Naive thymus-derived CD4-positive, alpha-beta T cell (primary cell): ENCODE measurements at regions of chr14 and their contacts with region 1.

Region 1: GRCh38 chr14:55160989-55161388 is 30.4 kb downstream of the DLGAP5 start:
- DNase-seq: peak in 5 of 9 donors; percentile 6 to 37 (median 16)
- ATAC-seq: peak; percentile 68
- H3K4me3 ChIP-seq: no peak overlapping the region
- H3K4me3 Mint-ChIP-seq: no peak overlapping the region
- H3K27ac ChIP-seq: no peak overlapping the region
- H3K27ac Mint-ChIP-seq: peak overlapping the region in 1 of 9 donors; percentile 60
- H3K4me1 ChIP-seq: no peaks in the 10 kb centered on the region
- H3K4me1 Mint-ChIP-seq: peaks cover 0 to 20% (median 9%) of the 10 kb centered on the region in 7 donors
- H3K27me3 ChIP-seq: no peaks in the 10 kb centered on the region
- H3K27me3 Mint-ChIP-seq: peaks cover 0 to 4% (median 0%) of the 10 kb centered on the region in 5 donors

Region 2: GRCh38 chr14:54893151-54893760 is 267.7 kb before region 1 on chr14:
- CTCF ChIA-PET with region 1: no interaction called
- POLR2A ChIA-PET with region 1: no interaction called
- intact Hi-C with region 1: no loop called
- DNase-seq: peak in 6 of 9 donors; percentile 13 to 35 (median 26)
- ATAC-seq: peak; percentile 87
- H3K4me3 ChIP-seq: no peak overlapping the region
- H3K4me3 Mint-ChIP-seq: no peak overlapping the region
- H3K27ac ChIP-seq: no peak overlapping the region
- H3K27ac Mint-ChIP-seq: no peak overlapping the region
- H3K4me1 ChIP-seq: peaks cover 0 to 3% of the 10 kb centered on the region in 2 donors
- H3K4me1 Mint-ChIP-seq: peaks cover 32 to 60% (median 51%) of the 10 kb centered on the region in 7 donors
- H3K27me3 ChIP-seq: no peaks in the 10 kb centered on the region
- H3K27me3 Mint-ChIP-seq: no peaks in the 10 kb centered on the region

Region 3: GRCh38 chr14:54981698-54982097 is 179.3 kb before region 1 on chr14:
- CTCF ChIA-PET with region 1: no interaction called
- POLR2A ChIA-PET with region 1: no interaction called
- intact Hi-C with region 1: loop called in 1 of 2 experiments (anchors 2 kb)
- DNase-seq: no peak
- ATAC-seq: no peak
- H3K4me3 ChIP-seq: no peak overlapping the region
- H3K4me3 Mint-ChIP-seq: no peak overlapping the region
- H3K27ac ChIP-seq: no peak overlapping the region
- H3K27ac Mint-ChIP-seq: no peak overlapping the region
- H3K4me1 ChIP-seq: no peaks in the 10 kb centered on the region
- H3K4me1 Mint-ChIP-seq: peaks cover 0 to 2% (median 0%) of the 10 kb centered on the region in 7 donors
- H3K27me3 ChIP-seq: no peaks in the 10 kb centered on the region
- H3K27me3 Mint-ChIP-seq: no peaks in the 10 kb centered on the region

Region 4: GRCh38 chr14:55094321-55095157 is 66.5 kb before region 1 on chr14:
- CTCF ChIA-PET with region 1: interaction called, 8 read pairs
- POLR2A ChIA-PET with region 1: no interaction called
- intact Hi-C with region 1: loop called (anchors 1 kb)
- DNase-seq: no peak
- ATAC-seq: no peak
- H3K4me3 ChIP-seq: no peak overlapping the region
- H3K4me3 Mint-ChIP-seq: no peak overlapping the region
- H3K27ac ChIP-seq: no peak overlapping the region
- H3K27ac Mint-ChIP-seq: no peak overlapping the region
- H3K4me1 ChIP-seq: peaks cover 0 to 14% of the 10 kb centered on the region in 2 donors
- H3K4me1 Mint-ChIP-seq: peaks cover 12 to 43% (median 16%) of the 10 kb centered on the region in 7 donors
- H3K27me3 ChIP-seq: no peaks in the 10 kb centered on the region
- H3K27me3 Mint-ChIP-seq: peaks cover 0 to 4% (median 0%) of the 10 kb centered on the region in 5 donors

Region 5: GRCh38 chr14:55819610-55820304 is 658.8 kb after region 1 on chr14:
- CTCF ChIA-PET with region 1: interaction called, 11 read pairs
- POLR2A ChIA-PET with region 1: no interaction called
- intact Hi-C with region 1: no loop called
- DNase-seq: no peak
- ATAC-seq: no peak
- H3K4me3 ChIP-seq: no peak overlapping the region
- H3K4me3 Mint-ChIP-seq: no peak overlapping the region
- H3K27ac ChIP-seq: no peak overlapping the region
- H3K27ac Mint-ChIP-seq: no peak overlapping the region
- H3K4me1 ChIP-seq: no peaks in the 10 kb centered on the region
- H3K4me1 Mint-ChIP-seq: peaks cover 0 to 13% (median 0%) of the 10 kb centered on the region in 7 donors
- H3K27me3 ChIP-seq: no peaks in the 10 kb centered on the region
- H3K27me3 Mint-ChIP-seq: peaks cover 5 to 29% (median 10%) of the 10 kb centered on the region in 5 donors